ENCODE measurements at regions of chr7 and their contacts with region 1.

Region 1: DNA sequence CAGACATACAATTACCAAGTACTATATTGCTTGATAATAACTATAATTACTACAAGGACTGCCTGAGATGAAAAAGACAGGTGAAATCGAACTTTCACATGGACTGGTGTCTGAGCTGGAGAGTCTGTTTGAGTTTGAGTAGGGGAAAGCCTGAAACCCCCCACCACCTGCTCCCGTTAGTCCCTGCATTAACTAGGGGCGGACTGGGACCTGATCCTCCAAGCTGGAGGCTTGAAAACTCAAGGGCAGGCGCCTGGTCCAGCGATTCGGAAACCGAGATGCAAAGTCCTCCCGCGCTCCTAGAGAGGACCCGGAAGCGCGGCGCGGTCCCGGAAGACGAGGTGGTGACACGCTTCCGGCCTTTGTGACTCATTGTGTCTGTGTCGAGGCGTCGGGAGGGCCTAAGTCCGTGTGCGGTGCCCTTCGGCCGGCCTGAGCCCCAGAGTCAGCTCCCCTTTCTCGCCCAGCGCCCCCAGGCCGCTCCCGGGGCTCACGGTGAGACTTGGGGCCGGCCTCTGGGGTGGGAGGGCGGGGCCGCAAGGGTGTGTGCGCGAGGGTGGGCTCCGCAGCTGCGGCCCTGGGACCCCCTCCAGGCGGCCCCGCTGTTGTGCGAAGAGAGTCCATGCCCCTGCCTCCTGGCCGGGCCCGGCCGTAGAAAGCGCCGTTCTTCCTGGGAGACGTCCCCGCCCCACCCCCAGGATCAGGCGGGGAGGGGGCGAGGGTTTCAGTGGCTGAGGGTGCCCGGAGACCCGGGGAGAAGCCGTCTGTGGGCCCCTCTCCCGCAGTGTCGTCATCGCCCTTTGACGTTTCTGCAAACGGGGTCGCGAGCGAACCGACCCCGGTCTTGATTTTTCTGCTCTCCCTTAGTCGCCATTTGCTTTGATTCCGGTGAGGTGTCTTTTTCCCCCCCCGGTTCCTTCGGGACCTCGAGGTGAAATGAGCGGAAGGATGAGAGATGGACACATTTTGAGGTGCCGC is at the start of gene ZKSCAN1:
- DNase-seq: peak; percentile 92
- ATAC-seq: peak; percentile 87
- H3K4me3 Mint-ChIP-seq: peak within 1 kb of the TSS; percentile 94
- H3K27ac Mint-ChIP-seq: peak within 1 kb of the TSS; percentile 96
- H3K4me1 Mint-ChIP-seq: peaks cover 53% of the 10 kb centered on the region
- H3K27me3 Mint-ChIP-seq: no peaks in the 10 kb centered on the region
- total RNA-seq, gene ZKSCAN1: 45.2 to 62.9 TPM

Region 2: GRCh38 chr7:99504603-99505323 is 510.8 kb before region 1 on chr7 and contains the start of gene ZKSCAN5:
- CTCF ChIA-PET with region 1: no interaction called
- POLR2A ChIA-PET with region 1: no interaction called
- intact Hi-C with region 1: loop called in 1 of 2 experiments (anchors 1 kb)
- DNase-seq: peak; percentile 99
- ATAC-seq: peak; percentile 87
- H3K4me3 Mint-ChIP-seq: peak within 1 kb of the TSS; percentile 87
- H3K27ac Mint-ChIP-seq: peak within 1 kb of the TSS; percentile 97
- H3K4me1 Mint-ChIP-seq: peaks cover 25% of the 10 kb centered on the region
- H3K27me3 Mint-ChIP-seq: no peaks in the 10 kb centered on the region
- total RNA-seq, gene ZKSCAN5: 10.1 to 12.1 TPM

Region 3: DNA sequence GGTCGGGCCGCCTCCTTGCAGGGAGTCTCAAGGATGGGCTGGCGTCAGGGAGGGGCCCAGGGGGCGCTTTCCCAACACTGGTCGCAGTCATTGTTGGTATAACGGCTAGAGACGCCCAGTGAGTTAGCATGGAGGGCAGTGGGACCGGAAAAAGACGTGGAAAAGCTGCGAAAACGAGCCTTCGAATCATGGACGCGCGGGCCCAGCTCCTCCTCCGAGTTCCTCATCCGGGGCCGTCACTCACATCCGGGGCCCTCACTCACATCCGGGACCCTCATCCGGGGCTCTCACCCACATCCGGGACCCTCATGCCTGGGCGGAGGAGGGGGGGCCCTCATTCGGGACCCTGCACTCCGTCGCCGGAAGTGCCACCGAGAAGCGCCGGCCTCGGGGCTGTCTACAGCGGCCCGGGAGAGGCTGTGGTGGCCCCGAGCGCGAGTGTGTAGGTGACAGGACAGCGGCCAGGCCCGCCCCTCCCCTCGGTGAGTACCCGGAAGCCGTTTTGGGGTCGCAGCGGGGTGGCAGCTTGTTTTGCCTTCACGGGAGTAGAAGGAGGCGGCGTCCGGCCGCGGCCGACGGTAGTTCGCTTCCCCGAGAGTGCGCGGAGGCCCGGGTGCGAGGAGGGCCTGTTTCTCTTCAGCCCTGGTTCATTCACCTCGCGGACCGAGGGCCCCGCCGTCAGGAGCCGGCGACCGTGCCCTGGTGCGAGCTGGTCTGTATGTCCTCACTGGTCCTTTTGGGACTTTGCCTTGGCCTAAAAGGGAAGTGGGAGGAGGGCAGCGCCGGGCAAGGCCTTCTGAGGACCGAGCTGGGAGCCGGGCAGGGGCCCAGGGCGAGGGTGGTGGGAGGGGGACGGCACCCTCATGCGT is 457.0 kb before region 1 on chr7 and contains the start of gene ZNF655:
- CTCF ChIA-PET with region 1: no interaction called
- POLR2A ChIA-PET with region 1: no interaction called
- intact Hi-C with region 1: loop called in 1 of 2 experiments (anchors 2 kb)
- DNase-seq: peak; percentile 90
- ATAC-seq: peak; percentile 75
- H3K4me3 Mint-ChIP-seq: peak within 1 kb of the TSS; percentile 94
- H3K27ac Mint-ChIP-seq: peak within 1 kb of the TSS; percentile 96
- H3K4me1 Mint-ChIP-seq: peaks cover 49% of the 10 kb centered on the region
- H3K27me3 Mint-ChIP-seq: no peaks in the 10 kb centered on the region
- total RNA-seq, gene ZNF655: 51.1 to 52.0 TPM

Region 4: GRCh38 chr7:99837649-99838361 is 177.7 kb before region 1 on chr7:
- CTCF ChIA-PET with region 1: no interaction called
- POLR2A ChIA-PET with region 1: no interaction called
- intact Hi-C with region 1: no loop called
- DNase-seq: peak; percentile 19
- ATAC-seq: peak; percentile 69
- H3K4me3 Mint-ChIP-seq: no peak overlapping the region
- H3K27ac Mint-ChIP-seq: peak overlapping the region; percentile 53
- H3K4me1 Mint-ChIP-seq: peaks cover 10% of the 10 kb centered on the region
- H3K27me3 Mint-ChIP-seq: no peaks in the 10 kb centered on the region

Region 5: DNA sequence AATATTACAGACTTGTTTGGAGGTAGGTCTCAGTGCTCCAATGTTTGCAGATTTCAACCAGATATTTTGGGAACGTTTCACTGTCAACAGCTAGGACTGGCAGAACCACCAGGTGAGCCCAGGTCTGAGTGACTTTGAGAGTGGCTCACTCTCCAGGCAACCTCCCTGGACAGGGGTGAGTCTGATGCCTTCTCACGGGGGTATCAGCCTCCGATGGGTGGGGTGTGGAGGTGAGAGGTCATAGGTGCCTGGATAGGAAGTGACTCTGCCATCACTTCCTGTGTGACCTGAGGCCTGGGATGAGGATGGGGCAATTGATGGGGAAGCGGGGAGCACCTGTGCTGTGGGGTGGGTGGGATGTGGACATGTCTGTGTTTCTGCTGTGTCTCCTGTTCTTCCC is 44.3 kb before region 1 on chr7:
- CTCF ChIA-PET with region 1: no interaction called
- POLR2A ChIA-PET with region 1: no interaction called
- intact Hi-C with region 1: no loop called
- DNase-seq: no peak
- ATAC-seq: no peak
- H3K4me3 Mint-ChIP-seq: no peak overlapping the region
- H3K27ac Mint-ChIP-seq: no peak overlapping the region
- H3K4me1 Mint-ChIP-seq: no peaks in the 10 kb centered on the region
- H3K27me3 Mint-ChIP-seq: peaks cover 11% of the 10 kb centered on the region

Region 6: DNA sequence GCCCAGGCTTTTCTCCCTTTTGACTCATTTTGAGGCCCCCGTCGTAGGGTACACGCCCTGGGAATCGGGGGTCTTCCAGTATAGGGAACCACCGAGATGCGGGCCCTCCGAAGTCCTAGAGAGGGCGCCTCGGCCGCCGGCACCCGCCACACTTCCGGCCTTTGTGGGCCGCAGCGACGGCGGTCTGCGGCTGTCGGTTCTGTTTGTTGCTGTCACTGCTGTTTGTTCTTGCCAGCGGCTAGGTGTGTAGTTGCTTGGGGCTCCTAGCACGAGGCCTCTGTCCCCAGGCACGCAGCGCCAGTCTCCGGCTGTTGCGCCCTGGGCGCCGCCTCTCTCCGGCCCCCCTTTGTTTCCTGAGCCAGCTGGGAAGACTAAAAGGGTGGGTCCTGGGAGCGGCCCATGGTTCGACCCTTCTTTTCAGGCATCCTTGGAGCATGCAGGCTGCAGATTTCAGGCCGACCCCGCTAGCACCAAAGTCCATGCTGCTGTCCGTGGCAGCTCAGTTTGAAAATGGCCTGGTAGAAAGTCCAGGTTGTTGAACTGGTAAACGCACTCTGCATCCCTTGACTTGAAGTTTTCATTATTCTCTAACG is 17.9 kb before region 1 on chr7:
- CTCF ChIA-PET with region 1: interaction called, 4 read pairs
- POLR2A ChIA-PET with region 1: no interaction called
- intact Hi-C with region 1: loop called in 1 of 2 experiments (anchors 1 kb)
- DNase-seq: peak; percentile 81
- ATAC-seq: peak; percentile 87
- H3K4me3 Mint-ChIP-seq: peak overlapping the region; percentile 67
- H3K27ac Mint-ChIP-seq: peak overlapping the region; percentile 89
- H3K4me1 Mint-ChIP-seq: peaks cover 15% of the 10 kb centered on the region
- H3K27me3 Mint-ChIP-seq: peaks cover 1% of the 10 kb centered on the region

Region 7: GRCh38 chr7:100088621-100089457 is 73.3 kb after region 1 on chr7 and contains the start of gene COPS6:
- CTCF ChIA-PET with region 1: no interaction called
- POLR2A ChIA-PET with region 1: interaction called, 3 read pairs
- intact Hi-C with region 1: loop called (anchors 2 to 5 kb)
- DNase-seq: peak; percentile 92
- ATAC-seq: peak; percentile 67
- H3K4me3 Mint-ChIP-seq: peak within 1 kb of the TSS; percentile 89
- H3K27ac Mint-ChIP-seq: peak within 1 kb of the TSS; percentile 96
- H3K4me1 Mint-ChIP-seq: peaks cover 25% of the 10 kb centered on the region
- H3K27me3 Mint-ChIP-seq: no peaks in the 10 kb centered on the region
- total RNA-seq, gene COPS6: 88.6 to 89.0 TPM

Region 8: DNA sequence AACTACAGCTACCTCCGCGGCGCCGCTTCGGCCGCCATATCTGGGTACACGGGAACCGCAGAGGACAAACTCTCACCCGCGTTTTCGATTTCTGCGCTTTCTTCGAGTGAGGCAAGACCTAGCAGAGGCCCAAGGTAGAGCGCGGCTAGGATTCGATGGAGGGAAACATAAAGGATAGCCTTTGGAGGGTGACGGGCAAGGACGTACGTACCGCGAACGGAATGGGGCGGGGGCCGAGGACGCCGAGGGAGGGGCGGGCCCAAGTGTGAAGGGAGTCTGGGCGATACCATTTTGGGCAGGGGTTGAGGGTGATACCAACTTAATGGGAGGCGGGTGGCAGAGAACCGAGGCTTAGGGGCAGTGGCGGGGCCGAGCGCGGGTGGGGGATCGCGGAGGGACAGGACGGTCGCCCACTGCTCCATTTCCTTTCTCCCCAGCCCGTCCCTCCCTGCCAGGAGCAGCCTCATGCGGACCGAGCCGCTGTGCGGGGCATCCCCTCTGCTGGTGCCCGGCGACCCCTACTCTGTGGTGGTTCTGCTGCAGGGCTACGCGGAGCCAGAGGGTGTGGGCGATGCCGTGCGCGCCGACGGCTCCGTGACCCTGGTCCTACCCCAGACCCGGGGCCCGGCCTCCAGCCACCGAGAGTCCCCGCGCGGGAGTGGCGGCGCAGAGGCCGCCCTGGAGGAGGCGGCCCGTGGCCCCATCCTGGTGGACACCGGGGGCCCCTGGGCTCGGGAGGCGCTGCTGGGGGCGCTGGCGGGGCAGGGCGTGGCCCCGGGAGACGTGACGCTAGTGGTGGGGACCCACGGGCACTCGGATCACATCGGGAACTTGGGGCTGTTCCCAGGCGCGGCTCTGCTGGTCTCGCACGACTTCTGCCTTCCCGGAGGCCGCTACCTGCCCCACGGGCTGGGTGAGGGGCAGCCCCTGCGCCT is 111.7 kb after region 1 on chr7 and contains the start of gene MBLAC1:
- CTCF ChIA-PET with region 1: no interaction called
- POLR2A ChIA-PET with region 1: no interaction called
- intact Hi-C with region 1: loop called in 1 of 2 experiments (anchors 2 kb)
- DNase-seq: peak; percentile 95
- ATAC-seq: peak; percentile 74
- H3K4me3 Mint-ChIP-seq: peak within 1 kb of the TSS; percentile 93
- H3K27ac Mint-ChIP-seq: peak within 1 kb of the TSS; percentile 99
- H3K4me1 Mint-ChIP-seq: peaks cover 28% of the 10 kb centered on the region
- H3K27me3 Mint-ChIP-seq: no peaks in the 10 kb centered on the region
- total RNA-seq, gene MBLAC1: 1.6 to 2.2 TPM

Region 9: GRCh38 chr7:100545360-100546128 is 530.0 kb after region 1 on chr7:
- CTCF ChIA-PET with region 1: no interaction called
- POLR2A ChIA-PET with region 1: no interaction called
- intact Hi-C with region 1: loop called in 1 of 2 experiments (anchors 10 kb)
- DNase-seq: peak; percentile 82
- ATAC-seq: peak; percentile 78
- H3K4me3 Mint-ChIP-seq: peak overlapping the region; percentile 98
- H3K27ac Mint-ChIP-seq: peak overlapping the region; percentile 99
- H3K4me1 Mint-ChIP-seq: peaks cover 96% of the 10 kb centered on the region
- H3K27me3 Mint-ChIP-seq: no peaks in the 10 kb centered on the region